Activated CD4-positive, alpha-beta memory T cell treated with anti-CD3 and anti-CD28 coated beads, Interleukin-2, amount 10 ng/mL, durations not matched to agents 7 days and 5 days (primary cell): ENCODE measurements at regions of chr11 and their contacts with region 1.

Region 1: DNA sequence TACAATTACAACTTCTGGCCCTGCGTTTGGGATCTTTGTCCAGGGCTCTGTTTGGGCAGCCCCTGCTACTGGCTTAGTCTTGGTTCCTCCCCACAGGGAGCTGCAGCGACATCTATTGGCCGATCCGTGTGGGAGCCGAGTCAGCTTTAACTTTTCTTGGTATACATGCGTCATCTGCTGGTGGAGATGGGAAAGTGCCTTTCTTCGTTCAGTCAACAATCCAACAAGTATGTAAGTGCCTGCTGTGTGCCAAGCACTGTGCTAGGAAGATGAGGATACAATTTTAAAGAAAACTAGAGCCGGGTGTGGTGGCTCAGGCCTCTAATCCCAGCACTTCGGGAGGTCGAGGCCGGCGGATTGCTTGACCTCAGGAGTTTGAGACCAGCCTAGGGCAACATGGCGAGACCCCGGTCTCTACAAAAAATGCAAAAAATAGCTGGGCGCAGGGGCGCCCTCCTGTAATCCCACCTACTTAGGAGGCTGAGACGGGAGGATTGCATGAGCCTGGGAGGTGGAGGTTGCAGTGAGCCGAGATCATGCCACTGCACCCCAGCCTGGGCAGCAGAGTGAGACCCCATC is 8.2 kb downstream of the TPBGL start:
- DNase-seq: peak; percentile 88
- H3K4me3 Mint-ChIP-seq: no peak overlapping the region
- H3K27ac Mint-ChIP-seq: no peak overlapping the region
- H3K4me1 Mint-ChIP-seq: no peaks in the 10 kb centered on the region
- H3K27me3 Mint-ChIP-seq: peaks cover 55% of the 10 kb centered on the region

Region 2: DNA sequence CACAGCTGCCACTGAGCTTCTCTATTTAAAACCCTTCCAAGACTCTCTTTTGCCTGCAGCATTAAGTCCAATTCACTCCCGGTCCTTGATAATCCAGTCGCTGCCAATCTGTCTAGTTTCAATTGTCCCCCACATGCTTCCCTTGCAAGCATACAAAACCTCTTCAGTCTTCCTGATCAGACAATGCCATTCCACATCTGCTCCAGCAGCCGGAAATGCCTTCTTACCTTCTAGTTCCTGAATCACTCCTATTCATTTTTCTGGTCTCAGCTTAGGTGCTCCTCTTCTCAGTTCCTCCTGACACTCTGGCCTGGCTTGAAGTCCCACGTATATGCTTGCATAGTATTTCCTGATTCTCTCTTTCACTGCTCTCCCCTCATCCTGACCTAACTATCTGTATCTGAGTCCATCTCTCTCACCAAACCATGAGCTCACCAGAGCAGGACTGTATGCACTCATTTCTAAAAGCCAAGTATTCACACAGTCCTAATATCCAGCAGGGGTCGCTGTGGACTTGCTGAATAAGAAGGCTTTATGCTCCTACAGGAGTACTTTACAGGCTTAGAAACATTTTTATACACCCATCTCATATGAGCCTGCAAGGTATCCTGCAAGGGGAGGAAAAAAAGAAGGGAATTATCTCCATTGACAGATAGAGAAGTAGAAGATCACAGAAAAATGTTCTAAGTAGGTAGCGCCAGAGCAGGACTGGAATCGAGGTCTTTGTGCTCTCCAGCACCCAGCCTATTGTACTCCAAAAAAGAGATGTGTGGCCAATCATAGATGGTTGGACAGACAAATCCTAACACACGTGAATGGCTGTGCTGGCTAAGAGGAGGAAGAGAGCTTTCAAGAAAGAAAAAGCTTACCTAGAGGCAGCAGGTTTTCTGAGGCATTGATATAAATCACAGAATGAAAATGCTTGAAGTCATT is 319.1 kb before region 1 on chr11:
- CTCF ChIA-PET with region 1: interaction called, 27 read pairs
- POLR2A ChIA-PET with region 1: interaction called, 3 read pairs
- DNase-seq: peak; percentile 76
- H3K4me3 Mint-ChIP-seq: no peak overlapping the region
- H3K27ac Mint-ChIP-seq: no peak overlapping the region
- H3K4me1 Mint-ChIP-seq: peaks cover 53% of the 10 kb centered on the region
- H3K27me3 Mint-ChIP-seq: no peaks in the 10 kb centered on the region

Region 3: GRCh38 chr11:75031771-75032549 is 216.8 kb before region 1 on chr11:
- CTCF ChIA-PET with region 1: interaction called, 12 read pairs
- POLR2A ChIA-PET with region 1: no interaction called
- DNase-seq: peak; percentile 67
- H3K4me3 Mint-ChIP-seq: no peak overlapping the region
- H3K27ac Mint-ChIP-seq: no peak overlapping the region
- H3K4me1 Mint-ChIP-seq: peaks cover 3% of the 10 kb centered on the region
- H3K27me3 Mint-ChIP-seq: no peaks in the 10 kb centered on the region

Region 4: DNA sequence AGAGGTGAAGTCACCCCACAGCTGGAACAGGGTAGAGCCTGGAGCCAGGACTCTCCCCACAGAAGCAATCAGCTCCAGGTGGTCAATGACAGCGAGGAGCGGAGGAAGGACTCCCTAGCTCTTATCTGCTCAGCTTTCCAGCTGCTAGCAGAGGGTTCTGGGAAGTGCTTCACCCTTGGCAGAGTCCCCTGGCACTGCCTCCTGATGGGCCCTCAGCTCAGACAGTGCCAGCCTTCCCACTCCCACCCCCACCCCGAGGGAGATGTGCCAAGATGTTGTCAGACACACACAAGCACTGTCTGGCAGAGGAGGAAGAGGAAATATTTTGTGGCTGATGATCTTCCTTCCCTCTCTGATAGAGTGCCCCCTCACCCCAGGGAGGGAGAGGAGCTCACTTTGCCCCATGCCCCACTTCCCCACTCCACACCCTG is 53.6 kb before region 1 on chr11:
- CTCF ChIA-PET with region 1: no interaction called
- POLR2A ChIA-PET with region 1: no interaction called
- DNase-seq: no peak
- H3K4me3 Mint-ChIP-seq: no peak overlapping the region
- H3K27ac Mint-ChIP-seq: no peak overlapping the region
- H3K4me1 Mint-ChIP-seq: no peaks in the 10 kb centered on the region
- H3K27me3 Mint-ChIP-seq: peaks cover 14% of the 10 kb centered on the region

Region 5: DNA sequence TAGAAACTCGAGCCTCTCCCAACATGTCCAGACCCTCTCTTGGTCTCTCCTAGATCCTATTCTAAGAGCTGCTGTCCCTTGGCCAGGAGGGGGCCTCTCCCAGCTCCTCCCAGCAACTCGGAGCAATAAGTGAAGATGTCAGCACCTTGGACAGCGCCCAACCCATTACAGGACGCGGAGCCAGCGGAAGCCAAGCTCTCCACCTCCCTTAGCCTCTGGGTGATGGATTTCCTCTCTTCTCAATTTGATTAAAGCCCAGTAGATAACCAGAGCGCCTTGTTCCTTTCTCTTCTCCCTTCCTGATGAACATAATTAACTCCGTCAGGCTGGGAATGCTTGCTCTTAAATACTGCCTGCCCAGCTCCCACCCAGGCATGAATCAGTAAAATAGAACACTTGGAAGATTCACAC is 34.4 kb before region 1 on chr11:
- CTCF ChIA-PET with region 1: interaction called, 13 read pairs
- POLR2A ChIA-PET with region 1: no interaction called
- DNase-seq: peak; percentile 86
- H3K4me3 Mint-ChIP-seq: no peak overlapping the region
- H3K27ac Mint-ChIP-seq: no peak overlapping the region
- H3K4me1 Mint-ChIP-seq: peaks cover 4% of the 10 kb centered on the region
- H3K27me3 Mint-ChIP-seq: peaks cover 33% of the 10 kb centered on the region

Region 6: DNA sequence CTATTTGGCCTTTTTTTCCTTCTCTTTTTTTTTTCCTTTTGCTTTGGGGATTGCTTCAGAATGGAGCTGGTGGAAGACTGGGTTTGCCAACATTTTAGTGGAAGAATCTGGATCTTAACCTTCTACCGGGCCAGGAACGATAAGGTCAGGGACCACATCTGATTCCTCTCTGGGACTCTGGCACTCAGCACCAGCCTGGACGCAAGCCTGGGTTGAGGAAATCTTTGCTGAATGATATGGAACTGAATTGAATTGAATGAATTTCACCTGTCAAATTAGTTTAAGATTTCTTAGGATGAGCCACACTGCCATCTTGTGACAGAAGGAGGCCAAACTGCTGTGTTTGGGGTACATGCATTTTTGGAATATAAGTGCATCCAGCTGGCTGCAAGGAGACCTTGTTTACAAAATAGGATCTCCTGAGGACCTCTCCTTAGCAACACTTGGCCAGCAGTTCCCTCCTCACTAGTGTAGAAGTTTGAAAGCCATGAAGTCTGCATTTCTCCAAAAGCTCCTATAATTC is 22.2 kb after region 1 on chr11:
- CTCF ChIA-PET with region 1: interaction called, 30 read pairs
- POLR2A ChIA-PET with region 1: interaction called, 8 read pairs
- DNase-seq: peak; percentile 41
- H3K4me3 Mint-ChIP-seq: no peak overlapping the region
- H3K27ac Mint-ChIP-seq: no peak overlapping the region
- H3K4me1 Mint-ChIP-seq: peaks cover 23% of the 10 kb centered on the region
- H3K27me3 Mint-ChIP-seq: no peaks in the 10 kb centered on the region

Region 7: DNA sequence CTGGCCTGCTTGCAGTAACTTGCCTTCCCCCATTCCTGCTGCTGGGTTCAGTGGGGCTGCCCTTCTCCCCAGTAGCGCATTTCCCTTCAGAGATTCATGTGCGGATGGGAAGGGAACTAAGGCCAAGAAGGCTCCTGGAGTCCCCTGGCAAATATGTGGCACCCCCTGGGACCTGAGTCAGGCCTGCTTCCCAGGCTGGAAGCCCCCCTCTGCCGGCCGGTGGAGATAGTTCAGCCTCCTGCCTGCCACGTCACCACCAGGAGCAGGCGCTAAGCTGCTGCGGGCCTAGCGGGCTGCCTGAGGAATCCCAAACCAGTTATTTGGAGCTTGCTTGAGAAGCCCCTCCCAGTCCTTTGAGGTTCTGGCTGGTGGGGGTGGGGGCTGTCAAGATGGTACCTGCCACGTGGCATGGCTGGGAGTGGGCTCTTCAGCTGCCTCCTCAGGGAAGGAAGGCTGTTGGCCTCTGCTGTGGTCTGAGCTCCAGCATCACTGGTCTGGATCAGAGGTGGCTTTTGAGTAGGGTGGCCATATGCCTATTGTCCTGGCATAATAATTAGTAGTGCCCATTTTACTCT is 315.3 kb after region 1 on chr11:
- CTCF ChIA-PET with region 1: no interaction called
- POLR2A ChIA-PET with region 1: no interaction called
- DNase-seq: no peak
- H3K4me3 Mint-ChIP-seq: peak overlapping the region; percentile 99
- H3K27ac Mint-ChIP-seq: peak overlapping the region; percentile 93
- H3K4me1 Mint-ChIP-seq: peaks cover 33% of the 10 kb centered on the region
- H3K27me3 Mint-ChIP-seq: no peaks in the 10 kb centered on the region